Posterior vena cava (tissue), 2 donors: ENCODE measurements at regions of chr6 and their contacts with region 1.

Region 1: DNA sequence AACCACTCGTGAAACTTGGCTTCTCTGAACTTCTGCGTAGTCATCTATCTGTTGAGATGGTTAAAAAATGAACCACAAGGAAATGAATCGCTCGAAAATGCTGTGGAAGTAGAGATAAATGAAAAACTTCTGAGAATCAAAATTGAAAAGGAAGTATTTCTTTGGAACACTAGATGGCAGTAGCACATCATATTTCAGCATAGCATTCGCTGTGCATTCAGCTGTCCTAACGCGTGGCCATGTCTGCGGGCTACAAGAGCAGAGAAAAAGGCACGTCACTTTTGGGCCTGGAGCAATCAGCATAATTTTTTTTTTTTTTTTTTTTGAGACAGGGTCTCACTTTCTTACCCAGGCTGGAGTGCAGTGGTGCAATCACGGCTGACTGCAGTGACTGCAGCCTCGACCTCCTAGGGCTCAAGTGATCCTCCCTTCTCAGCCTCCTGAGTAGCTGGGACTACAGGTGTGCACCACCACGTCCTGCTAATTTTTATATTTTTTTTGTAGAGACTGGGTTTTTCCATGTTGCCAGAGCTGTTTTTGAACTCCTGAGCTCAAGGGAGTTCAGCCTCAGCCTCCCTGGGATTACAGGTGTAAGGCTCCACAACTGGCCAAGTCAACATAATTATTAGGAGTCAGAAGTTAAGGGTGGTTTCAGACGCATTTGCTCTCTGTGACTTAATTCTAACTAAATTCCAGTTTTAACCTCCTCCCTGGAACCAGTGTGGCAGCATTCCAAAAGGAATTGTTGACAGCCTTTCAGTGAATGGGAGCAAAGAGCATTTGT is 8.8 kb upstream of the PERP start:
- DNase-seq: no peak

Region 2: DNA sequence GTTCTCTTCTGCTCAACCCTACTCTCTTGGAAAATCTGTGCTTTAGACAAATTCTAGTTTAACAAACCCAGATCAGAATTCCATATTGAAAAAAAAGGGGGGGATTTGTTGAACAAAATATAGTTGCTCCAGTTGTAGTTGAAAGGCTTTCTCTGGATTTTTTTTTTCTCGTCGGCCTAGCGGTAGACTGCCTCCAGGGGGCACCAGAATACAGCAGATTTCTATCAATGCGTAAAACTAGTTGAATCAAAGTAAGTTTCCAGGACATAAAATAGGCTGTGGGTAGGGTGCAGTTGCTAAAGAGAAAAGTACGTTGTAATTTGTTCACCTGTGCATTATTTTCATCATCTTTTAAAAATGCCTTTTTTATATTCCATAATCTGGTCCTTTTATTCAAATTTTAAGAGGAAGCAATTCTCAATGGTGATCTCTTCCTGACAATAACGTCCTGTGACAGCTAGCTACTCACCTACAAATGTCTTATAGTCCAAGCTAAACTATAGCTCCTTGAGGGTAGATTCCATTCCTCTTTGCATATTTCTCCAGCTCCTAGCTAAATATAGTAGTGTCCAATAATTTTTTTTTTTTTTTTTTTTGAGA is 114.2 kb before region 1 on chr6:
- intact Hi-C with region 1: loop called (anchors 5 to 10 kb)
- DNase-seq: no peak

Region 3: GRCh38 chr6:138403801-138404661 is 288.0 kb after region 1 on chr6 and contains the start of gene HEBP2:
- intact Hi-C with region 1: loop called in 1 of 2 experiments (anchors 10 kb)
- DNase-seq: peak; percentile 97
- total RNA-seq, gene HEBP2: 61.0 to 78.9 TPM

Region 4: DNA sequence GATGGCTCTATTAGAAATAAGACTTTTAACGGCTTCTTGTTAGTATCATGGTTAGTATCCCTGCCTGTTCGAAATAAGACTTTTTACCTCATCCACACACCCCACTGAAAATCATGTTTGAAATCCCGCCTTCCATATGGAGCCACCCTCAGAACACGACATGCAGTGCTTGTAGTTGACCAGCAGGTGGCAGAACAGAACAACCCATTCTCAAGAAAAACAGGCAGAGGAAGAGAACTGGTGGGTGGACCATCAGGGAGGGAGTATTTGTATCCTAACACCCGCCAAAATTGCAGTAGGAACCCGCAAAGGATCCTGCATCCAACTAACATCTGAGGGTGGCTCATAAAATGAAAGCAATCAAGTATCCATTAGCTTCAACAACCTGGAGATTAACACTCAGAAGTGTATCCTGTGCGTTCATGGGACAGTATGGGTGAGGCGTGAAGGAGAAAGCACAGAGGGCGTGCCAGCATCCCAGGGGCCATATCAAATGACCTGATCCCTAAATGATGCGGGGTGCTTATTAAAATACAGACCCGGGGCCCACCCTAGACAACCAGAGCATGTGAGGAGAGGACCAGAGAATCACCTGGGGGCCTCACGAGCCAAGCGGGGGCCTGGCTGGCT is 472.9 kb after region 1 on chr6:
- intact Hi-C with region 1: loop called in 1 of 2 experiments (anchors 10 kb)
- DNase-seq: no peak

Region 5: GRCh38 chr6:138765896-138766655 is 650.0 kb after region 1 on chr6:
- intact Hi-C with region 1: loop called in 1 of 2 experiments (anchors 10 kb)
- DNase-seq: no peak